Upper lobe of right lung (tissue), 1 donor: ENCODE measurements at regions of chr1 and their contacts with region 1.

Region 1: GRCh38 chr1:67749844-67750689 is 65.1 kb downstream of the GADD45A start:
- DNase-seq: no peak
- ATAC-seq: peak; percentile 72
- H3K4me3 ChIP-seq: no peak overlapping the region
- H3K27ac ChIP-seq: peak overlapping the region; percentile 62
- H3K4me1 ChIP-seq: peaks cover 42% of the 10 kb centered on the region
- H3K27me3 ChIP-seq: no peaks in the 10 kb centered on the region
- CTCF ChIP-seq: no peak

Region 2: GRCh38 chr1:67535474-67535873 is 214.6 kb before region 1 on chr1:
- intact Hi-C with region 1: loop called (anchors 10 kb)
- DNase-seq: peak; percentile 88
- ATAC-seq: peak; percentile 92
- H3K4me3 ChIP-seq: no peak overlapping the region
- H3K27ac ChIP-seq: peak overlapping the region; percentile 65
- H3K4me1 ChIP-seq: peaks cover 14% of the 10 kb centered on the region
- H3K27me3 ChIP-seq: no peaks in the 10 kb centered on the region
- CTCF ChIP-seq: peak; percentile 95

Region 3: GRCh38 chr1:67561704-67562113 is 188.4 kb before region 1 on chr1:
- intact Hi-C with region 1: loop called (anchors 10 kb)
- DNase-seq: peak; percentile 94
- ATAC-seq: peak; percentile 95
- H3K4me3 ChIP-seq: no peak overlapping the region
- H3K27ac ChIP-seq: no peak overlapping the region
- H3K4me1 ChIP-seq: peaks cover 18% of the 10 kb centered on the region
- H3K27me3 ChIP-seq: no peaks in the 10 kb centered on the region
- CTCF ChIP-seq: peak; percentile 85